SK-N-SH (cell line): ENCODE measurements at regions of chr18 and their contacts with region 1.

Region 1: DNA sequence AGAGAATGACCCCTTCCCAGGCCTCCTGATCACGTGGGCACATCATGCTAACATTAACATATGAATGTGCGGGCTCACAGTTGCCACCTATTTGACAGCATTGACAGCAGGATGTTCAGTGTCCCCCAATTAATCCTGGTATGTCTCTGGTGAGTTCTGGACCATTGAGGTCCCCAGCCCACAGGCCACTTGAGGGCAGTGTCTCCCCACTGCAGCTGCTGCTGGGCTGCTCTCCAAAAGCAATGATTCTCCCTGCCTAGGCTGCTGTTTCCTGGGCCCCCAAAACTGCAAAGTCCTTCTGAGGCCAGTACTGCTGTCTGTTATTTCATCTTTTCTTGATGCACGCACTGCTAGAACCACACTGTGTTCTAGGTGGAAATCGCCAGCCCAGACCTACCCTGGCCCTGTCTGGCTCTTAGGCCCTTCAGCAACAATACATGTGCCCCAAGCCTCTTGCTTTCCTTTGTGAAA is 52.7 kb upstream of the MAPK4 start:
- DNase-seq: peak; percentile 61
- H3K4me3 ChIP-seq: no peak overlapping the region
- H3K27ac ChIP-seq: no peak overlapping the region
- H3K4me1 ChIP-seq: no peaks in the 10 kb centered on the region
- H3K27me3 ChIP-seq: no peaks in the 10 kb centered on the region
- CTCF ChIP-seq: peak; percentile 57
- EP300 ChIP-seq: no peak
- RAD21 ChIP-seq: peak; percentile 86

Region 2: GRCh38 chr18:50590593-50590992 is 83.4 kb after region 1 on chr18:
- CTCF ChIA-PET with region 1: interaction called, 10 read pairs
- POLR2A ChIA-PET with region 1: no interaction called
- DNase-seq: no peak
- H3K4me3 ChIP-seq: no peak overlapping the region
- H3K27ac ChIP-seq: no peak overlapping the region
- H3K4me1 ChIP-seq: no peaks in the 10 kb centered on the region
- H3K27me3 ChIP-seq: no peaks in the 10 kb centered on the region
- CTCF ChIP-seq: no peak
- EP300 ChIP-seq: no peak
- RAD21 ChIP-seq: no peak